Heart right ventricle (tissue), 16 donors: ENCODE measurements at regions of chr2 and their contacts with region 1.

Region 1: GRCh38 chr2:201071479-201072200 is at the starts of genes HYCC2 and NDUFB3:
- DNase-seq: peak; percentile 90 to 92
- ATAC-seq: peak; percentile 99 to 100 (median 99)
- H3K4me3 ChIP-seq: peak within 1 kb of the TSS; percentile 68 to 97 (median 88)
- H3K27ac ChIP-seq: peak within 1 kb of the TSS; percentile 81 to 97 (median 90)
- H3K4me1 ChIP-seq: peaks cover 4 to 70% (median 50%) of the 10 kb centered on the region in 9 donors
- H3K27me3 ChIP-seq: no peaks in the 10 kb centered on the region
- CTCF ChIP-seq: peak in 6 of 9 donors; percentile 28 to 65 (median 46)
- total RNA-seq, gene HYCC2: 9.4 to 15.3 (median 12.9) TPM
- total RNA-seq, gene NDUFB3: 313 to 513 (median 457) TPM

Region 2: DNA sequence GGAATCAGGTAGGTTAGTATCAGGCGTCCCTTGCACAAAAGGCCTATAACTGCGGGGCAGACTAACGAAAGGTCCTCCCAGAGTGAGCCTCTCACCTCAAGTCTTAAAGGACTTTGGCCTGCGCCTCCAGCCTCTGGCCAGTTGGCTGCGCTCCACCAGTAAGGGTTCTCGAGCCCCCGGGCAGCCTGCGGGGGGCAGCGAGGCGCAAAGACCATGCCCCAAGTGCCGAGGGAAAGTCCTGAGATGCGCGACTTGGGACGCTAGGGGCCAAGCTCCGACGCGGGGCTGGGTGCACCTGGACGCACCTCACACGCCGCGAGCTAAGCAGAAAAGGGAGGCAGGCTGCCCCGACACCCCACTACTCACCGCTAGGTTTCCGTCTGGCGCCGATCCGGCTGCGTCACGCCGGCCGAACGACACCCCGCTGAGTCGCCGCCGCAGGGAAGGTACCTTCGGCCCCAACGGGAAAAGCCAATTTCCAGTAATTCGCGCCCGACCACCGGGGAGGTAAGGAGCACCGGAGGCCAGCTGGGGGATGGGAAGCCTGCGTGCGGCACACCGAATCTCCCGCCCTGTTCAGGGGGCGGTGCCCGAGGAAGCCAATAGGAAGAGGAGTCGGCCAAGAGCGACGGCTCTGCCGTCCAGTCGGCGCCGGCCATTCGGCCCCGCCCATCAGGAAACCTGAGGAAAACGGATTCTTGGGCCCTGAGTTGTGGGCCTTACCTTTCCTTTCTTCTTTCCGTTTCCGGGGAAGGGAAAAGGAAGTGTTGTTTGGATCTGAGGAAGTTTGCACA is 108.3 kb before region 1 on chr2 and contains the start of gene ORC2:
- intact Hi-C with region 1: loop called in 7 of 10 experiments (anchors 1 to 5 kb)
- DNase-seq: peak; percentile 95
- ATAC-seq: peak; percentile 99 to 100 (median 99)
- H3K4me3 ChIP-seq: peak within 1 kb of the TSS; percentile 62 to 96 (median 89)
- H3K27ac ChIP-seq: peak within 1 kb of the TSS; percentile 80 to 93 (median 91)
- H3K4me1 ChIP-seq: peaks cover 0 to 53% (median 41%) of the 10 kb centered on the region in 9 donors
- H3K27me3 ChIP-seq: no peaks in the 10 kb centered on the region
- CTCF ChIP-seq: peak; percentile 0 to 69 (median 54)
- total RNA-seq, gene ORC2: 18.6 to 38.8 (median 27.5) TPM

Region 3: DNA sequence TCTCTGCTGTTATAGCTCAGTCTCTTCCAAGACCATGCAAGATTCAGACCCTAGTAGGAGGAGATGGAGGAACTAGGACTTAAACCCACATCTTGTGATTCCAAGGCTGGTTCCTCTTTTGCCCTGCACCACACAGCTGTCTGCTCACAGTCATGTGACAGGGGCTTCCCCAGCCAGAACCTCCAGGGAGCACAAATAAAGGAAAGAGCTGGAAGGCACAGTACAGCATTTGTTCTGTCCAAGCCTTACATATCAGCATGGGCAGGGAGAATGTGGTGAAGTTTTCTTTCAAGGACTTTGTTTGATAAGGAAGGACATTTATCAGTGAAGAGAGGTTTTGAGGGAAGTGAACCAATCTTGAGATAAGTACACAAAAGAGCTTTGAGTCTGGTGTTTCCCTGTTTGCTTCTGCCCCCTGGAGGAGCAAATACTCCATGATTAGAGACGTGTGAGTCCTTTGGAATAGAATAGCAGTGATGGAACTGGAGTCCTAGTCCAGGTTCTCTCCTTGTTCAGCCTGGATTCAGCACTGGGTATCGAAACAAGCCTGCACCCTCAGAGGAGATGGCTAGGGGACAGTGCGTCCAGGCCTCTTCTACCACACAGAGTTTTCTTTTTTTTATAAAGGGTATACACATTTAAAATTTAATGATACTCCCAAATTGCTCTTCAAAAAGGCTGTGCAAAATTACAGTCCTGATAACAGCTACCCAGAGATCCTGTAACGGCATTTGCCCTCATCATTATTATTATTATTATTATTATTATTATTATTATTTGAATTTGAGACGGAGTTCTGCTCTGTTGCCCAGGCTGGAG is 86.7 kb after region 1 on chr2:
- intact Hi-C with region 1: loop called in 9 of 10 experiments (anchors 1 to 10 kb)
- DNase-seq: peak in 1 of 2 donors; percentile 72
- ATAC-seq: peak; percentile 80 to 88 (median 84)
- H3K4me3 ChIP-seq: no peak overlapping the region
- H3K27ac ChIP-seq: peak overlapping the region in 9 of 10 donors; percentile 29 to 86 (median 53)
- H3K4me1 ChIP-seq: peaks cover 7 to 68% (median 34%) of the 10 kb centered on the region in 9 donors
- H3K27me3 ChIP-seq: no peaks in the 10 kb centered on the region
- CTCF ChIP-seq: peak; percentile 31 to 81 (median 66)

Region 4: GRCh38 chr2:201164166-201164565 is 92.5 kb after region 1 on chr2:
- intact Hi-C with region 1: loop called in 8 of 10 experiments (anchors 5 to 10 kb)
- DNase-seq: no peak
- ATAC-seq: no peak
- H3K4me3 ChIP-seq: no peak overlapping the region
- H3K27ac ChIP-seq: peak overlapping the region in 1 of 10 donors; percentile 49
- H3K4me1 ChIP-seq: peaks cover 0 to 30% (median 12%) of the 10 kb centered on the region in 9 donors
- H3K27me3 ChIP-seq: no peaks in the 10 kb centered on the region
- CTCF ChIP-seq: no peak